Stomach (tissue), 19 donors: ENCODE measurements at regions of chr2 and their contacts with region 1.

Region 1: GRCh38 chr2:64488050-64488974 is 34.4 kb downstream of the LGALSL start:
- DNase-seq: peak; percentile 75 to 87
- H3K4me3 ChIP-seq: no peak overlapping the region
- H3K27ac ChIP-seq: no peak overlapping the region
- H3K4me1 ChIP-seq: peaks cover 0 to 9% (median 2%) of the 10 kb centered on the region in 4 donors
- H3K27me3 ChIP-seq: peaks cover 0 to 5% (median 0%) of the 10 kb centered on the region in 3 donors
- CTCF ChIP-seq: peak in 6 of 7 experiments; percentile 68 to 98 (median 92)
- EP300 ChIP-seq: no peak
- POLR2A ChIP-seq: no peak

Region 2: DNA sequence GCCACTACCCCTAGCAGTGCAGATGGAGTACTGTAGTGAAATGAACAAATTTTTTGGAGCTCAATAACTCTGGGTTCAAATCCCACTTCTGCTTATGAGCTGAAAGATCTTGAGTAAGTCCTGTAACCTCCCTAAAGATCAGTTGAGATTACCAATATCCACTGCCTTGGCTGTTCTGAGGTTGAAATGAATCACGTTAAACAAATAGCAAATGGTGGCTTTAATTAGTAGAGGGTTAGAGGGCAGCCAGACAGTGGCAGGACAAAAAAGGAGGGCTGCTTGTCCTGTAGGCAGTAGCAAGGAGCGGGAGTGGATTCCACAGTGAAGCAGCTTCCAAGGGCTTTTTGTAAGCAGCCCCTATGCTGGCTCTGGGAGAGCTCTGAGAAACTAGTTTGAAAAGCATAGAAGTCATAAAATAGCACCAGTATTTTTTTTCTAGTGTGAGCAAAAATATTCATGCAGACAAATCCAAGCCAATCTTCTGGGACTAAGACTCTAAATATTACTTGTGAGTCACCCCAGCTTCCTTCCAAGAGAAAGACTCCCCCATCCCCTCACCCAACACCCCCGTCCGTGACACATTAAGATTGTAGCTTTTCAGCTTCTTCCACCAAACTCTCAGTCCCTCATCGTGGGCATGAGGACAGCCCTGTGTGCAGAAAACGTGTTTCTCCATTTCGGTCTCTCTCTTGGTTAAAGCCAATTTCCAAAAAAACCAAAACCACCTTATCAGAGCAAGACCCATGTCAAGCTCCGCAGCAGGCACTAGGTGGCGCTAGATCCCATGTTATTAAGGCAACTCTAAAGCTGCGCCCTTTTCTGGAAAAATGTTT is 157.8 kb before region 1 on chr2:
- intact Hi-C with region 1: loop called (anchors 5 kb)
- DNase-seq: peak; percentile 83 to 96
- H3K4me3 ChIP-seq: peak overlapping the region in 3 of 4 donors; percentile 2 to 28 (median 18)
- H3K27ac ChIP-seq: peak overlapping the region; percentile 41 to 80 (median 72)
- H3K4me1 ChIP-seq: peaks cover 18 to 45% (median 27%) of the 10 kb centered on the region in 4 donors
- H3K27me3 ChIP-seq: no peaks in the 10 kb centered on the region
- CTCF ChIP-seq: peak in 6 of 7 experiments; percentile 26 to 95 (median 92)
- EP300 ChIP-seq: no peak
- POLR2A ChIP-seq: no peak